Naive thymus-derived CD4-positive, alpha-beta T cell (primary cell): ENCODE measurements at regions of chr18 and their contacts with region 1.

Region 1: DNA sequence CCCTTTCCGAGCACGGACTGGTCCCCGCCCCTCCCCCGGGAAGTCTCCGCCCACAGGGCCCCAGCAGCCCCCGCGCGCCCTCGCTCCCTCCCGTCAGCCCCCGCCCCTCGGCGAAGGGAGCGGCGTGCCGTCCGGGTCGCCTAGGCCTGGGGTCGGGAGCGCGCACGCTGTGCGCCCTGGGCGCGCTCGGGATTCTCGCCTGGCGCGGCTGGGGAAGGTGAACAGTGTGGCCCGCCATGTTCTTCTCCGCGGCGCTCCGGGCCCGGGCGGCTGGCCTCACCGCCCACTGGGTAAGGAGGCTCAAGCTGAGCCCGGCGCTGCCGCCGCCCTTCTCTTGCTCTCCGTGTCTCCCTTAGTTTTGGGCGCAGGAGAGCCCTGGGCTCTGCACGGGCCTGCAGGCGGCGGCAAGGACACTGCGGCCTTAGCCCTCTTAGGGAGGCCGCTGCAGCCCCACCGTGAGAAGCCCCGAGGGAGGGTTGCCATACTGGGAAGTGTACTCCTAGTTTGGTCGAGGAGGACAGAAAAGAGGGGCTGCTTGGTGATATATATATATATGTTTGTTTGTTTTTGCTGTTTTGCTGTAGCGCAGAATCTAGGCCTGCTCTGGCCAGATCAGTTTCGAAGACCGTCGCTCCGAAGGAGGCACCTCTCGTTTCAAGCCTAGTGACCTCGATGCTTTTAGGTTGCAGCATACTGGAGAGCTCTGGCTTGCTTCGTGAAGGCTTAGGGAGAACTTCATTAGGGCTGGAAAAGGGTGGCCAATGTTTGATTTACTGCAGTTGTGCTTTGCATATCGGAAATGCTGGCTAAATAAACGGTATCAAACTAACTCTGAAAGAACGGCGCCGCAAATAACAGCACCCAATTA is at the start of gene NDUFV2:
- DNase-seq: peak; percentile 93 to 99 (median 97)
- ATAC-seq: peak; percentile 97
- H3K4me3 ChIP-seq: peak within 1 kb of the TSS; percentile 81
- H3K4me3 Mint-ChIP-seq: peak within 1 kb of the TSS; percentile 79 to 98 (median 96)
- H3K27ac ChIP-seq: peak within 1 kb of the TSS; percentile 82
- H3K27ac Mint-ChIP-seq: peak within 1 kb of the TSS; percentile 90 to 98 (median 95)
- H3K4me1 ChIP-seq: peaks cover 40 to 48% of the 10 kb centered on the region in 2 donors
- H3K4me1 Mint-ChIP-seq: peaks cover 46 to 61% (median 57%) of the 10 kb centered on the region in 7 donors
- H3K27me3 ChIP-seq: no peaks in the 10 kb centered on the region
- H3K27me3 Mint-ChIP-seq: no peaks in the 10 kb centered on the region
- total RNA-seq, gene NDUFV2: 127 to 198 (median 171) TPM

Region 2: GRCh38 chr18:8608795-8609658 is 493.7 kb before region 1 on chr18 and contains the start of gene RAB12:
- CTCF ChIA-PET with region 1: no interaction called
- POLR2A ChIA-PET with region 1: no interaction called
- intact Hi-C with region 1: loop called (anchors 5 kb)
- DNase-seq: peak; percentile 76 to 93 (median 87)
- ATAC-seq: peak; percentile 97
- H3K4me3 ChIP-seq: peak within 1 kb of the TSS; percentile 78
- H3K4me3 Mint-ChIP-seq: peak within 1 kb of the TSS; percentile 88 to 97 (median 94)
- H3K27ac ChIP-seq: peak within 1 kb of the TSS; percentile 76
- H3K27ac Mint-ChIP-seq: peak within 1 kb of the TSS; percentile 91 to 99 (median 96)
- H3K4me1 ChIP-seq: peaks cover 18 to 29% of the 10 kb centered on the region in 2 donors
- H3K4me1 Mint-ChIP-seq: peaks cover 42 to 63% (median 56%) of the 10 kb centered on the region in 7 donors
- H3K27me3 ChIP-seq: no peaks in the 10 kb centered on the region
- H3K27me3 Mint-ChIP-seq: peaks cover 0 to 16% (median 7%) of the 10 kb centered on the region in 5 donors
- total RNA-seq, gene RAB12: 19.8 to 26.2 (median 23.0) TPM

Region 3: GRCh38 chr18:9017170-9017904 is 85.4 kb before region 1 on chr18:
- CTCF ChIA-PET with region 1: no interaction called
- POLR2A ChIA-PET with region 1: no interaction called
- intact Hi-C with region 1: no loop called
- DNase-seq: peak in 4 of 9 donors; percentile 3 to 72 (median 11)
- ATAC-seq: peak; percentile 83
- H3K4me3 ChIP-seq: peak overlapping the region; percentile 41
- H3K4me3 Mint-ChIP-seq: peak overlapping the region in 9 of 10 donors; percentile 42 to 78 (median 62)
- H3K27ac ChIP-seq: no peak overlapping the region
- H3K27ac Mint-ChIP-seq: peak overlapping the region in 1 of 9 donors; percentile 71
- H3K4me1 ChIP-seq: no peaks in the 10 kb centered on the region
- H3K4me1 Mint-ChIP-seq: peaks cover 0 to 12% (median 9%) of the 10 kb centered on the region in 7 donors
- H3K27me3 ChIP-seq: no peaks in the 10 kb centered on the region
- H3K27me3 Mint-ChIP-seq: peaks cover 0 to 15% (median 6%) of the 10 kb centered on the region in 5 donors

Region 4: GRCh38 chr18:9055185-9055584 is 47.6 kb before region 1 on chr18:
- CTCF ChIA-PET with region 1: no interaction called
- POLR2A ChIA-PET with region 1: no interaction called
- intact Hi-C with region 1: no loop called
- DNase-seq: no peak
- ATAC-seq: no peak
- H3K4me3 ChIP-seq: no peak overlapping the region
- H3K4me3 Mint-ChIP-seq: no peak overlapping the region
- H3K27ac ChIP-seq: no peak overlapping the region
- H3K27ac Mint-ChIP-seq: no peak overlapping the region
- H3K4me1 ChIP-seq: no peaks in the 10 kb centered on the region
- H3K4me1 Mint-ChIP-seq: peaks cover 0 to 4% (median 0%) of the 10 kb centered on the region in 7 donors
- H3K27me3 ChIP-seq: no peaks in the 10 kb centered on the region
- H3K27me3 Mint-ChIP-seq: peaks cover 0 to 4% (median 0%) of the 10 kb centered on the region in 5 donors

Region 5: DNA sequence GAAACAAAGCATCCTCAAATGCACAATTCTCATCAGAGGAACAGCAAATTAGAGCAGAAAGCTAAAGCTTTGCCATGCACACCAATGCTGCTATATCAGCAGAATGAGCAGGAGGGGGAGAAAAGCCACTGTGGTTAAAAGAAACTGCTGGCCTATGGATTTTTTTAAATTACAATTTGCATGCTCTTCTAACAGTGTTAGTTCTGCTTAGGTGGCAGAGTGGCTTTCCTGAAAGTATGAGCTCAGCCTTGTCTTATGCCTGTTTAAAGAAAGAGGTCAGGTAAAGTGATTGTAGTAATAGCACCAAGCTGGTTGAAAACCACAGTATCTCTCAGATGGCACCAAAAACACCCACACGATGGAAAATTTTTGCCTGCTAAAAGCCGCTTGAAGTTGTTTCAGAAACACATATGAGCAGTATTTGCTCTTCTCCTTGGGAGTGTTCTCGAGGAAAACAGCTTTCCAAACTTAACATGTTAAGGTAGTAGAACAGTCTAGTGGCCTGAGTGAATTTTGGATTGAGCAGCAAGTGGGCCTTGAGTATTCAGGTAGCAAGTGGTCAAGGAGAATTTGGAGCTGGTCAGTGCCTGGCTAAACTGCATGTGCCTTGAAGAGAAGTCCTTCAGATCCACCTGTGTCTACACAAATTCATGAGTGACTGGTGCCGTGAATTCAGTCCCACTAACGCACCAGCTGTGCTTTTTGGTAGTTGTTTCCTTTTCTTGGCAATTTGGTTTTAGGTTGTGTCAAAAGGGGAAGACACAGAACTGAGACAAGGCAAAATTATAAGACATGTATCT is 19.8 kb before region 1 on chr18:
- CTCF ChIA-PET with region 1: interaction called, 5 read pairs
- POLR2A ChIA-PET with region 1: interaction called, 61 read pairs
- intact Hi-C with region 1: loop called (anchors 1 kb)
- DNase-seq: peak in 8 of 9 donors; percentile 16 to 52 (median 34)
- ATAC-seq: peak; percentile 86
- H3K4me3 ChIP-seq: peak overlapping the region; percentile 18
- H3K4me3 Mint-ChIP-seq: peak overlapping the region; percentile 42 to 88 (median 72)
- H3K27ac ChIP-seq: peak overlapping the region; percentile 76
- H3K27ac Mint-ChIP-seq: peak overlapping the region; percentile 82 to 98 (median 94)
- H3K4me1 ChIP-seq: peaks cover 10 to 19% of the 10 kb centered on the region in 2 donors
- H3K4me1 Mint-ChIP-seq: peaks cover 19 to 51% (median 44%) of the 10 kb centered on the region in 7 donors
- H3K27me3 ChIP-seq: no peaks in the 10 kb centered on the region
- H3K27me3 Mint-ChIP-seq: no peaks in the 10 kb centered on the region

Region 6: DNA sequence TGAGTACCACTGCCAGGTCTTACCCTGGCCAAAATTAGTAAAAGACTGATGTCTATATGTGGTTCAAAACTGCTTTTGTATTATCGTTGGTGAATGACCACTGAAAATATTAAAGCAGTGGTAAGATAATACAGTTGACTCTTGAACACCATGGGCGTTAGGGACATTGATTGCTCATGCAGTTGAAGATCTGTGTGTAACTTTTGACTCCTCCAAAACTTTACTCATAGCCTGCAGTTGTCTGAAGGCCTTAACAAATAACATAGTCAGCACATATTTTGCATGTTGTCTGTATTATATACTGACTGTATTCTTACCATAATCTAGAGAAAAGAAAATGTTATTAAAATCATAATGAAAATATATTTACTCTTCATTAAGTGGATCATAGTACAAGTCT is 28.1 kb after region 1 on chr18:
- CTCF ChIA-PET with region 1: interaction called, 20 read pairs
- POLR2A ChIA-PET with region 1: interaction called, 472 read pairs
- intact Hi-C with region 1: loop called (anchors 1 kb)
- DNase-seq: no peak
- ATAC-seq: no peak
- H3K4me3 ChIP-seq: no peak overlapping the region
- H3K4me3 Mint-ChIP-seq: no peak overlapping the region
- H3K27ac ChIP-seq: peak overlapping the region; percentile 34
- H3K27ac Mint-ChIP-seq: peak overlapping the region in 4 of 9 donors; percentile 16 to 83 (median 57)
- H3K4me1 ChIP-seq: peaks cover 10 to 19% of the 10 kb centered on the region in 2 donors
- H3K4me1 Mint-ChIP-seq: peaks cover 20 to 79% (median 66%) of the 10 kb centered on the region in 7 donors
- H3K27me3 ChIP-seq: no peaks in the 10 kb centered on the region
- H3K27me3 Mint-ChIP-seq: no peaks in the 10 kb centered on the region

Region 7: GRCh38 chr18:9147440-9148202 is 44.9 kb after region 1 on chr18:
- CTCF ChIA-PET with region 1: interaction called, 13 read pairs
- POLR2A ChIA-PET with region 1: interaction called, 472 read pairs
- intact Hi-C with region 1: loop called (anchors 1 kb)
- DNase-seq: peak in 7 of 9 donors; percentile 35 to 66 (median 49)
- ATAC-seq: peak; percentile 81
- H3K4me3 ChIP-seq: no peak overlapping the region
- H3K4me3 Mint-ChIP-seq: peak overlapping the region in 9 of 10 donors; percentile 3 to 79 (median 42)
- H3K27ac ChIP-seq: peak overlapping the region; percentile 30
- H3K27ac Mint-ChIP-seq: peak overlapping the region; percentile 21 to 90 (median 66)
- H3K4me1 ChIP-seq: peaks cover 18 to 59% of the 10 kb centered on the region in 2 donors
- H3K4me1 Mint-ChIP-seq: peaks cover 54 to 93% (median 84%) of the 10 kb centered on the region in 7 donors
- H3K27me3 ChIP-seq: no peaks in the 10 kb centered on the region
- H3K27me3 Mint-ChIP-seq: no peaks in the 10 kb centered on the region

Region 8: DNA sequence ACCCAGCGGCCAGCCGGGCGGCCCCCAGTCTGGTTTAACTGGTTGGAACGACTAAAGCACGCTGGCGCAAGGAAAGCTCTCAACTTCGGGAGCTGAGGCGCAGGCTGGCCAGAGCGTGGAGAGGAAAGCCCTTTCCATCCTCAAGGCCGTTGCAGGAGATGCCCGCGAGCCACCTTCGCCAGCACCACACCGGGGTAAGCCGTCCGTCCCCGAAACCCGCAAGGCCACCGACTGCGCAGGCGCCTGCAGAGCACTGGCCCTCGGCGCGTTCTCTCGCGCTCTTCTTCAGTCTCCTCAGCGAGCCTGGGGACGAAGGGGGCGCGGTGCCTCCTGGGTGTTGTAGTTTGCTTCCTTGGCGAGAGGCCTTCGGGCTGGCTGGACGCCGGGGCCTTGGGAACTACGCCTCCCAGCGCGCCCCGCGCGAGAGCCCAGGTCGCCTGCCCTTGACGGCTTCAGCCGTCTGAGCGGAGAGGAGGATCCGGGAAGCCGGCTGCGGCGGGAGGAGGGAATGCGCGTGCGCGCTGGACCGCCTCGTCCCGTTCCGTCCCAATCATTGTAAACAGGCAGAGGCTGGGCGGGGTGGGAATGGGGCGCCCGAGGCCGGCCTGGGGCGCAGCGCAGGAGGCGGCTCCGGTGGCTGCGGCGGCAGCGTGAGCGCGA is 372.4 kb after region 1 on chr18 and contains the start of gene RALBP1:
- CTCF ChIA-PET with region 1: no interaction called
- POLR2A ChIA-PET with region 1: no interaction called
- intact Hi-C with region 1: loop called (anchors 1 kb)
- DNase-seq: peak; percentile 92 to 98 (median 96)
- ATAC-seq: peak; percentile 99
- H3K4me3 ChIP-seq: peak within 1 kb of the TSS; percentile 88
- H3K4me3 Mint-ChIP-seq: peak within 1 kb of the TSS; percentile 84 to 99 (median 97)
- H3K27ac ChIP-seq: peak within 1 kb of the TSS; percentile 81
- H3K27ac Mint-ChIP-seq: peak within 1 kb of the TSS; percentile 82 to 97 (median 94)
- H3K4me1 ChIP-seq: peaks cover 0 to 14% of the 10 kb centered on the region in 2 donors
- H3K4me1 Mint-ChIP-seq: peaks cover 21 to 41% (median 30%) of the 10 kb centered on the region in 7 donors
- H3K27me3 ChIP-seq: no peaks in the 10 kb centered on the region
- H3K27me3 Mint-ChIP-seq: peaks cover 0 to 24% (median 5%) of the 10 kb centered on the region in 5 donors
- total RNA-seq, gene RALBP1: 20.3 to 47.8 (median 42.2) TPM

Region 9: GRCh38 chr18:10100941-10101701 is 998.4 kb after region 1 on chr18:
- CTCF ChIA-PET with region 1: no interaction called
- POLR2A ChIA-PET with region 1: no interaction called
- intact Hi-C with region 1: no loop called
- DNase-seq: no peak
- ATAC-seq: no peak
- H3K4me3 ChIP-seq: no peak overlapping the region
- H3K4me3 Mint-ChIP-seq: no peak overlapping the region
- H3K27ac ChIP-seq: no peak overlapping the region
- H3K27ac Mint-ChIP-seq: no peak overlapping the region
- H3K4me1 ChIP-seq: no peaks in the 10 kb centered on the region
- H3K4me1 Mint-ChIP-seq: peaks cover 0 to 3% (median 0%) of the 10 kb centered on the region in 7 donors
- H3K27me3 ChIP-seq: no peaks in the 10 kb centered on the region
- H3K27me3 Mint-ChIP-seq: peaks cover 0 to 1% (median 0%) of the 10 kb centered on the region in 5 donors

Region 10: DNA sequence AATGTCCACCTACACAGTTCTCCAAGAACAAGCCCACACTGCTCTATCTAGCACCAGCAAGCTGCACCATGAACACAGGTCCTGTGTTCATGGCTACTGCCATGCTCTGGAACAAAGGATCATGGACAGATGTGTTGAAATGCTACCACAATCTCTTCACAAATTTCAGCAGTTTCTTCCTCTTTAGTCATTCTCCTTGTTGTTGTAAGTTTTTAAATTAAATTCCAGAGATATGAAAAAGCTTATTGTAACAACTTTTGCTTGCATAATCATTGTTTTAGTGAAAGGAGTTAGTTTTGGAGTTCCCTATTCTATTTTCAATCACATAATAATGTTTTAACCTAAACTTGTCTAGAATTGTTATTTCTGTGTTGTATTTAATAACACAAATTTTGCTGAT is 1405.8 kb after region 1 on chr18:
- CTCF ChIA-PET with region 1: no interaction called
- POLR2A ChIA-PET with region 1: no interaction called
- intact Hi-C with region 1: no loop called
- DNase-seq: no peak
- ATAC-seq: no peak
- H3K4me3 ChIP-seq: no peak overlapping the region
- H3K4me3 Mint-ChIP-seq: no peak overlapping the region
- H3K27ac ChIP-seq: no peak overlapping the region
- H3K27ac Mint-ChIP-seq: no peak overlapping the region
- H3K4me1 ChIP-seq: no peaks in the 10 kb centered on the region
- H3K4me1 Mint-ChIP-seq: no peaks in the 10 kb centered on the region
- H3K27me3 ChIP-seq: no peaks in the 10 kb centered on the region
- H3K27me3 Mint-ChIP-seq: peaks cover 2 to 38% (median 19%) of the 10 kb centered on the region in 5 donors